ENCODE measurements at regions of chr20 and their contacts with region 1.

Region 1: DNA sequence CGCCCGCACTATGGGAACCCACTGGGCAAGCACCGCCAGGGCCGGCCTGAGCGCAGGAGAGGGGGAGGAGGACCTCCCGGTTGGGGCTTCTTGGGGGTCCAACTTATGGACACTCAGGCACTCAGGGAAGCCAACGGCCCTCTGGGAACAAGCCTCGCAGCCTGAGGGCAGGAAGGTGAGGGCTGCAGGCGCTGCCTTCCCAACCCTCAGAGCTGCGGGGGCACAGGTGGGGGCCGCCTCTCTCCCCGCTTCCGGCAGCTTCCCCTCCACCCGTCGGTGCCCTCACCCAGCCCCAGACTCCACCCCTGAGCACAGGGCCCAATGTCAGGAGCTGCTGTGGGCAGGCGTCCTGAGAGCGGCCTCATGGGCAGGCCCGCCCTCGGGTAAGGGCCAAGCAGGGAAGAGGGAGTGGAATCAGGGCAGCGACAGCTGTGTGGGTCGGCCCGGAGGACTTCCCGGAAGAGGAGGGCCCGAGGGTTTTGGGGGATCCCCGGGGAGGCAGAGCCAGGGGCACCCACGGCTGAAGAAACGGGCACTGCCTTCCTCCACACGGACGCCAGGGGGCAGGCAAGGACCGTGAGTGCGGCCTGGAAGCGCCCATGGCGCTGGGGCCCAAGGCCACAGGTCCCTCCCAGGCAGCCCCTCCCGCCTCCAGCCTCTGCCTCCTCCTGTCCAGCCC is 488 bp upstream of the PTK6 start:
- DNase-seq: peak; percentile 98 to 100
- ATAC-seq: peak; percentile 86 to 95
- H3K4me3 ChIP-seq: peak overlapping the region; percentile 59
- H3K27ac ChIP-seq: peak overlapping the region; percentile 93 to 97
- H3K4me1 ChIP-seq: peaks cover 18% of the 10 kb centered on the region
- CTCF ChIP-seq: peak; percentile 94
- EP300 ChIP-seq: no peak
- POLR2A ChIP-seq: peak; percentile 50
- RAD21 ChIP-seq: peak; percentile 94 to 99

Region 2: DNA sequence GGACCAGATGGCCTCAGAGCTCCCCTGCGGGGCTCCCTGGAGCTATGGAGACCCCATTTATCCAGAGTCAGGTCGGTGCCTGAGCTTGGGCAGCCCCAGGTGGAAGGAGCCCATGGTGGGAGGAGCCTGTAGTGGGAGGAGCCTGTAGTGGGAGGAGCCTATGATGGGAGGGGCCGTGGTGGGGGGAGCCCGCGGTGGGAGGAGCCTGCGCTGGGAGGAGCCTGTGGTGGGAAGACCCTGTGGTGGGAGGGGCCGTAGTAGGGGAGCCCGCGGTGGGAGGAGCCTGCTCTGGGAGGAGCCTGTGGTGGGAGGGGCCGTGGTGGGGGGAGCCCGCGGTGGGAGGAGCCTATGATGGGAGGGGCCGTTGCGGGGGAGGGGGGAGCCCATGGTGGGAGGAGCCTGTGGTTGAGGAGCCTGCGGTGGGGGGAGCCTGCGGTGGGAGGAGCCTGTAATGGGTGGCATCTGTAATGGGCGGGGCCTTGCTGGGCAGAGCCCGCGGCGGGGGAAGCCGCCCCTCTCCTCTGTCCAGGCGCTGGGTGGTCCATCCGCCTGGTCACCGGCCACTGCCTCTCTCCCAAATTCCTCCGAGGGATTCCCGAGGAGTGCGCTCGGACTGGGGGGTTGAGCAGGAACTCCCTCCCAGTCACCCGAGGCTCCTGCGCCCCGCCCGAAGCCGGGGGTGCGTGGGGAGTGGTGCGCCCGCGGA is 15.7 kb after region 1 on chr20:
- CTCF ChIA-PET with region 1: interaction called, 93 read pairs
- POLR2A ChIA-PET with region 1: interaction called, 3 read pairs
- DNase-seq: peak; percentile 50 to 90
- ATAC-seq: peak; percentile 21 to 75; a peak in 5 of 6 replicates
- H3K4me3 ChIP-seq: peak overlapping the region; percentile 71
- H3K27ac ChIP-seq: peak overlapping the region; percentile 73 to 83
- H3K4me1 ChIP-seq: peaks cover 4% of the 10 kb centered on the region; the same call in 1 of the 3 replicates
- CTCF ChIP-seq: no peak
- EP300 ChIP-seq: no peak
- POLR2A ChIP-seq: no peak
- RAD21 ChIP-seq: no peak

Region 3: GRCh38 chr20:63627129-63627750 is 89.6 kb after region 1 on chr20:
- CTCF ChIA-PET with region 1: interaction called, 23 read pairs
- POLR2A ChIA-PET with region 1: interaction called, 7 read pairs
- DNase-seq: peak; percentile 94 to 97
- ATAC-seq: peak; percentile 79 to 86
- H3K4me3 ChIP-seq: peak overlapping the region; percentile 97
- H3K27ac ChIP-seq: peak overlapping the region; percentile 97 to 100
- H3K4me1 ChIP-seq: peaks cover 9% of the 10 kb centered on the region
- CTCF ChIP-seq: no peak
- EP300 ChIP-seq: no peak
- POLR2A ChIP-seq: peak; percentile 73
- RAD21 ChIP-seq: no peak

Region 4: GRCh38 chr20:63682384-63683139 is 144.9 kb after region 1 on chr20:
- CTCF ChIA-PET with region 1: interaction called, 34 read pairs
- POLR2A ChIA-PET with region 1: interaction called, 4 read pairs
- DNase-seq: peak; percentile 87 to 94
- ATAC-seq: peak; percentile 79 to 93
- H3K4me3 ChIP-seq: no peak overlapping the region
- H3K27ac ChIP-seq: peak overlapping the region; percentile 93 to 94
- H3K4me1 ChIP-seq: peaks cover 40% of the 10 kb centered on the region
- CTCF ChIP-seq: no peak
- EP300 ChIP-seq: peak in 1 of 2 experiments; percentile 48; a peak in 1 of 5 replicates
- POLR2A ChIP-seq: peak; percentile 49
- RAD21 ChIP-seq: no peak; a peak in 2 of 5 replicates

Region 5: DNA sequence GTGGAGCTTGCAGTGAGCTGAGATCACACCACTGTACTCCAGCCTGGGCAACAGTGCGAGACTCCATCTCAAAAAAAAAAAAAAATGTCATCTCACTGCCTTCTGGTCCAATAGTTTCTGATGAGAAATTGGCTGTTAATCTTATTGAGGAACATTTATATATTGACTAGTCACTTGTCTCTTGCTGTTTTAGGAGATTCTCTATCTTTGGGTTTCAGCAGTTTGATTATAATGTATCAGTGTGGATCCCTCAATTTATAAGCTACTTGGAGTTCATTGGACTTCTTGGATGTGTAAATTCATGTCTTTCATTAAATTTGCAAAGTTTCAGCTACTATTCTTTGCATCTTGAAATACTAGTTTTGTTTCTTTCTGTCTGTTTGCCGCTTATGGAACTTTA is 181.3 kb after region 1 on chr20:
- CTCF ChIA-PET with region 1: no interaction called
- POLR2A ChIA-PET with region 1: no interaction called
- DNase-seq: no peak
- ATAC-seq: no peak
- H3K4me3 ChIP-seq: no peak overlapping the region
- H3K27ac ChIP-seq: no peak overlapping the region
- H3K4me1 ChIP-seq: no peaks in the 10 kb centered on the region
- CTCF ChIP-seq: no peak
- EP300 ChIP-seq: no peak
- POLR2A ChIP-seq: no peak
- RAD21 ChIP-seq: no peak

Region 6: GRCh38 chr20:63942250-63942959 is 404.7 kb after region 1 on chr20:
- CTCF ChIA-PET with region 1: interaction called, 12 read pairs
- POLR2A ChIA-PET with region 1: no interaction called
- DNase-seq: peak in 1 of 2 experiments; percentile 52
- ATAC-seq: peak in 1 of 2 experiments; percentile 6; a peak in 1 of 6 replicates
- H3K4me3 ChIP-seq: no peak overlapping the region
- H3K27ac ChIP-seq: 0 out of 6 replicates have a peak overlapping the region, but pooled peaks of 1 of the 2 experiments have one; percentile 16
- H3K4me1 ChIP-seq: peaks cover 5% of the 10 kb centered on the region; the same call in 1 of the 3 replicates
- CTCF ChIP-seq: no peak
- EP300 ChIP-seq: no peak
- POLR2A ChIP-seq: no peak
- RAD21 ChIP-seq: no peak

Region 7: DNA sequence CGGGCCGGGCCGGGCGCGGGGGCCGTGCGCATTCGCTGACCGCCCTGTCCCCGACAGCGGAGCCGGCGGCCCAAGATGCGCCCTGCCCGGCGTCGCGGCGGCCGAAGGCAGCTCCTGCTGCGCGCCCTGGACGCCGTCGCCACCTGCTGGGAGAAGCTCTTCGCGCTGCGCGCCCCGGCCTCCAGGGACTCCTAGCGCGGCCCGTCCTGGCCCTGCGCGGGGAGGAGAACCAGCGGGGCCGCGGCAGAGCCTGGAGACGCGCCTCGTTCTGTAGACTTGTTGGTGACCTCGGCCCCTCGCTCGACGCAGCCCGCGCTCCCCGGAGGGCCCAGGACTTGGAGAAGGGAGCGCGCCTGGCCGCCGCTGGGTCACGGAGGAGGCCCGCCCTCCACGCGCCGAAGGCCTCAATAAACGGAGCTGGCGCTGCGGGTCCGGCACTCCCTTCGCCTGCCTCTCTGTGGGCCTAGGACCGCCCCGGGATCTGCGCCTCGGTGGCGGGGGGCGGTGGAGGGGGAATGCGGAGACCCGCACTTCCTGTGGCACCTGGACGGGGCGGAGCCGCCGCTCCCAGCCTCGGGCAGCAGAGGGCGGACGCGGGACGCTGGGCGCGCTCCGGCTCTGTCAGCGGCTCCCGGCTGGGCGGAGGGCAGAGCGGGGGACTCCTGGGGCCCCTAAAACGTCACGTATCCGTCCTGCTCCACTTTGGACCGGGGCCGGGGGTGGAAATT is 501.1 kb after region 1 on chr20:
- CTCF ChIA-PET with region 1: interaction called, 18 read pairs
- POLR2A ChIA-PET with region 1: interaction called, 4 read pairs
- DNase-seq: peak; percentile 85 to 91
- ATAC-seq: peak; percentile 76 to 88
- H3K4me3 ChIP-seq: peak overlapping the region; percentile 48
- H3K27ac ChIP-seq: peak overlapping the region; percentile 75 to 92
- H3K4me1 ChIP-seq: peaks cover 13% of the 10 kb centered on the region; the same call in 2 of the 3 replicates
- CTCF ChIP-seq: peak; percentile 56
- EP300 ChIP-seq: no peak
- POLR2A ChIP-seq: peak; percentile 19; the same call in 1 of the 2 replicates
- RAD21 ChIP-seq: peak; percentile 52 to 68; a peak in 4 of 5 replicates

Measured in A549 (cell line).